ENCODE measurements at regions of chr9 and their contacts with region 1.

Region 1: GRCh38 chr9:2857564-2858198 is 13.8 kb upstream of the PUM3 start:
- DNase-seq: peak; percentile 69
- H3K4me3 ChIP-seq: no peak overlapping the region
- H3K27ac ChIP-seq: no peak overlapping the region
- H3K4me1 ChIP-seq: peaks cover 0 to 3% (median 0%) of the 10 kb centered on the region in 4 donors
- H3K27me3 ChIP-seq: peaks cover 0 to 3% (median 0%) of the 10 kb centered on the region in 3 donors
- CTCF ChIP-seq: peak; percentile 43 to 83 (median 60)
- EP300 ChIP-seq: no peak
- POLR2A ChIP-seq: no peak

Region 2: GRCh38 chr9:2787065-2787464 is 70.6 kb before region 1 on chr9:
- intact Hi-C with region 1: no loop called
- DNase-seq: no peak
- H3K4me3 ChIP-seq: no peak overlapping the region
- H3K27ac ChIP-seq: no peak overlapping the region
- H3K4me1 ChIP-seq: peaks cover 0 to 12% (median 3%) of the 10 kb centered on the region in 4 donors
- H3K27me3 ChIP-seq: no peaks in the 10 kb centered on the region
- CTCF ChIP-seq: no peak
- EP300 ChIP-seq: no peak
- POLR2A ChIP-seq: no peak

Region 3: DNA sequence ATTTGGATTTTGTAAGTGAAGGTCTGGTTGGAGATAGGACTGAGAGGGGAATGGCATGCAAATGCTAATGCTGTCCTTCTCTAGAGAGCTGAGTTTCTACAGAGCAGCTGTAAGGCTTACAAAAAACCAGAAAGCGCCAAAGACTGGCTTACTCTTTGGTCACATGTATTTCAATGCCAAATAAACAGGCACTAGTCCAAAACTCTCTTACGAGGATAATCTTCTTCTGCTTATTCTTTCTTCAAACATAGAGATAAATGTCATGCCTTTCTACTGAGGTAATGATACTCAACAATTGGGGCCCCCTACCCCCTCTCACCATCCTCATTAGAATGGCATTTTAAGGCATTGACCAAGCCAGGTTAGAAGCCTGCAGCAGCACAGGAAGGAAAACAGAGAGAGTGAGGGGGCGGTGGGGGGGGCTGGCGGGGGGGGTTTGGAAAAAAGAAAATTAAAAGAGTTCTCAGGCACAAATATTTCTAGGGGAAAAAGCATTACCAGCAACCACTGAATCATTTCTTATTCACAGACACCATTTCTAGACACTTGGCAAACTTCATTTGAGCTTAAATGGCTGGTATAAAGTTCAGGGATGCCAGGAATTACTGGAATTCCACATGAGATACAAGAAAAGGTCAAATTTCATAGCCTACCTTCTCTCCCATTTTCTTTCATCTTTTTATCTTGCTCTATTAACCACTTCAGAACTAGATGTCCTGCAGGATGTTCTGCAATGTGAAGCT is 47.8 kb before region 1 on chr9:
- intact Hi-C with region 1: no loop called
- DNase-seq: no peak
- H3K4me3 ChIP-seq: no peak overlapping the region
- H3K27ac ChIP-seq: peak overlapping the region; percentile 59 to 81 (median 66)
- H3K4me1 ChIP-seq: peaks cover 0 to 46% (median 31%) of the 10 kb centered on the region in 4 donors
- H3K27me3 ChIP-seq: no peaks in the 10 kb centered on the region
- CTCF ChIP-seq: no peak
- EP300 ChIP-seq: peak in 1 of 4 donors; percentile 65
- POLR2A ChIP-seq: no peak

Region 4: GRCh38 chr9:3181049-3181953 is 323.6 kb after region 1 on chr9:
- intact Hi-C with region 1: loop called (anchors 10 kb)
- DNase-seq: no peak
- H3K4me3 ChIP-seq: peak overlapping the region in 3 of 4 donors; percentile 11 to 28 (median 19)
- H3K27ac ChIP-seq: no peak overlapping the region
- H3K4me1 ChIP-seq: peaks cover 0 to 14% (median 10%) of the 10 kb centered on the region in 4 donors
- H3K27me3 ChIP-seq: peaks cover 0 to 13% (median 12%) of the 10 kb centered on the region in 3 donors
- CTCF ChIP-seq: no peak
- EP300 ChIP-seq: no peak
- POLR2A ChIP-seq: no peak